ENCODE measurements at regions of chr1 and their contacts with region 1.

Region 1: GRCh38 chr1:46724991-46725735 is 6.2 kb upstream of the EFCAB14 start:
- DNase-seq: peak; percentile 44 to 88 (median 63)
- ATAC-seq: peak; percentile 97
- H3K4me3 ChIP-seq: no peak overlapping the region
- H3K4me1 ChIP-seq: no peaks in the 10 kb centered on the region
- CTCF ChIP-seq: peak; percentile 58

Region 2: GRCh38 chr1:46622344-46622743 is 102.8 kb before region 1 on chr1:
- intact Hi-C with region 1: loop called in 1 of 2 experiments (anchors 10 kb)
- DNase-seq: peak in 2 of 3 donors; percentile 65 to 76
- ATAC-seq: peak; percentile 75
- H3K4me3 ChIP-seq: no peak overlapping the region
- H3K4me1 ChIP-seq: peaks cover 2% of the 10 kb centered on the region
- CTCF ChIP-seq: peak; percentile 49

Region 3: DNA sequence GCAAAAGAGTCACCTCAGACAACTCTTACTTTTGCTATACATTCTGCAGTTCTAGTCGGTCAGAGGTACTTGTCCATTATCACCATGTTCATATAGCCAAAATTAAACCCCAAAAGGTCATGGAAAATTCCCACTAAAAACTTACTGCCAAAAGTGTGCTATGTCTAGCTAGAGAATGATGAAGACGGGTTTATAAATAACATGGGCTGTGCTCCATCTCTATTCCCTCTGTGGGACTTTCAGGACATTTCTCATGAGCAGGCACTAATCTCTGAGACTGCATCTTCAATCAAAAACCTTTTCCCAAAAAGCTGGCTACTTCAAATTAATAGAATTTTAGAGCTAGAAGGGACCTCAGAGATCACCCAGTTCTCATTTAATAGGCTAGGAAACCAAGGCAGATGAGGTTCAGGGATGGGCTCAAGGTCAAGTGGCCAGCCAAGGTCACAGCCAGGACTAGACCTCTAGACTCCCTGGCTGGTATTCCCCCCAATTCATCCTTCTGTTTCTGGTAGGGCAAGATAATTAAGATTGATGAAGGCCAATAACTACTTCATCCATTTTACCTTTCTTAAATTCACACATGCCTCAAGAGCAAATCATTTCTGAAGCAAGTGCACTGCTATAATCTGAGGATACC is 87.6 kb before region 1 on chr1:
- intact Hi-C with region 1: no loop called
- DNase-seq: no peak
- ATAC-seq: no peak
- H3K4me3 ChIP-seq: no peak overlapping the region
- H3K4me1 ChIP-seq: no peaks in the 10 kb centered on the region
- CTCF ChIP-seq: no peak

Measured in mucosa of descending colon (tissue), 3 donors.